ENCODE measurements at regions of chr14 and their contacts with region 1.

Region 1: GRCh38 chr14:55270832-55271565 is at the start of gene FBXO34:
- DNase-seq: peak; percentile 98
- H3K4me3 ChIP-seq: peak within 1 kb of the TSS; percentile 93
- H3K27ac ChIP-seq: peak within 1 kb of the TSS; percentile 58
- H3K4me1 ChIP-seq: peaks cover 37% of the 10 kb centered on the region
- CTCF ChIP-seq: peak; percentile 98
- total RNA-seq, gene FBXO34: 26.3 and 28.3 TPM in 2 replicates

Region 2: DNA sequence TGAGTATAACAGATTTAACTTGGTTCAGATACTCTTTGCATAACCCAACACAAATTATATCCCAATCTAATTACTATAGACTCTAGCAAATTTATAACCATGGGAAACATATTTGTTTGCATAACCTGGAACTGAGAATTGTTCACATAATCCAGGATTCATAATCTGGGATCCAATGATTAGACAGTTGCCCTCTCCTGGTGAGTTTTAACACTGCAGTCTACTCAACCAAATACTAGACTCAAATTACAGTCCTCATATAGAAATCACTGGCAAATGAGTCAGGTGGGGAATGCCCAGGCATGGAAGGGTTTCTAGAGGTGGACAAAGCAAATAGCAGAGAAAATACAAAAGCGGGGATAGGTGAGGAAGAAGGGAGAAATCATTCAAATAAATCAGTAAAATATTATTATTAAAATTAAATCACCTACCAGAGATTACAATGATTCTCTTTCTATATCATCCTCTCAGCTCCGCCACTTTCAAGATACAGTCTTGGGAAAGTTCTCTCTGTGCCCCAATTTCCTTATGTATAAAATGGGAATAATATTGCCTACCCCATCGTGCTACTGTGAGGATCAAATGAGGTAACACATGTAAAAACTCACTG is 377.7 kb before region 1 on chr14:
- CTCF ChIA-PET with region 1: no interaction called
- POLR2A ChIA-PET with region 1: no interaction called
- intact Hi-C with region 1: no loop called
- DNase-seq: peak; percentile 49
- H3K4me3 ChIP-seq: no peak overlapping the region
- H3K27ac ChIP-seq: no peak overlapping the region
- H3K4me1 ChIP-seq: no peaks in the 10 kb centered on the region
- CTCF ChIP-seq: peak; percentile 91

Region 3: GRCh38 chr14:55051426-55052268 is 219.4 kb before region 1 on chr14 and contains the start of gene MAPK1IP1L:
- CTCF ChIA-PET with region 1: no interaction called
- POLR2A ChIA-PET with region 1: no interaction called
- intact Hi-C with region 1: loop called (anchors 10 kb)
- DNase-seq: peak; percentile 92
- H3K4me3 ChIP-seq: peak within 1 kb of the TSS; percentile 95
- H3K27ac ChIP-seq: peak within 1 kb of the TSS; percentile 81
- H3K4me1 ChIP-seq: peaks cover 20% of the 10 kb centered on the region
- CTCF ChIP-seq: peak; percentile 87
- total RNA-seq, gene MAPK1IP1L: 24.6 and 27.9 TPM in 2 replicates

Region 4: DNA sequence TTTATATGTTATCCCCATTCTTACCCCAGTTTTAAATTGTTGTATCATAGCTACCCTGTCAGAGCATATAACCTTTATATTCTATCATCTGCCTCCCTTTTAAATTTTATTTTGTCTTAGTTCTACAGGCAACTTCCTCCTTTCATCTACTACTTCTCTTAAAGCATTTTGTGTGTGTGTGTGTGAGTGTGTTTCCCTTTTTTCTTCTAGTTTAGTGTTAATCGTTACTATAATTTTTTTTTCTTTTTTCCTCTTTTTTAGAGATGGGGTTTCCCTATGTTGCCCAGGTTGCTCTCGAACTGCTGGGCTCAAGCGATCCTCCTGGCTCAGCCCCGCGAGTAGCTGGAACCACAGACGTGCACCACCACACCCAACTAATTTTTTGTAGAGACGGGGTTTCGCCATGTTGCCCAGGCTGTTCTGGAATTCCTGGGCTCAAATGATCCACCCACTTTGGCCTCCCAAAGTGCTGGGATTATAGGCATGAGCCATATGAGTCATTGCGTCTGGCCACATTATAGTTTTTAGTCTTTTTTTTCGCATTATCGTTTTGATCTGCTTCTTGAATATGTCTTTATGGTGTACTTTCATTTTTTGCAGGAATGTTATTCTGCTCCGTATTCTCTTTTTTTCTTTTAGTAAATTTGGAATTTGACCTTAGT is 32.8 kb before region 1 on chr14:
- CTCF ChIA-PET with region 1: no interaction called
- POLR2A ChIA-PET with region 1: no interaction called
- intact Hi-C with region 1: no loop called
- DNase-seq: no peak
- H3K4me3 ChIP-seq: no peak overlapping the region
- H3K27ac ChIP-seq: no peak overlapping the region
- H3K4me1 ChIP-seq: no peaks in the 10 kb centered on the region
- CTCF ChIP-seq: no peak

Region 5: DNA sequence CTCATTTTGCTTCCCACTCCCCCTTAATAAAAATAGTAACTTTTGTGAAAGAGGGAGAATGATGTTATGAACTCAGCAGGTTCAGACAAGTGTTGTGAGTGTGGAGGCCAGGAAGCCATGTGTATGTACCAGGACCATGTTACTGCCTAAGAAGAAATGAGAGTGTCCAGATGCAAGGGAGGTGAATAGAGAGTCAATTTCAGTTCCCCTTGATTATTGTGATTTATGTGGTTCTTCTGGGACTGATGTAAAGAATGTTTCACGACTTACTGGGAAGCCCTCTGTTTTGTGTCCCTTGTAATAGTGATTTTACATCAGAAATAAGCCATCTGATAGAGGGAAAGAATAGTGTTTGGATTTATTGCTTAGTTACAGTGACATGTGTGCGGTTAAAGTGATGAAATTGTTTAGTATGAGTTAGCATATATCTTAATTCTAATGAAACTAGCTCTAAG is 32.7 kb after region 1 on chr14:
- CTCF ChIA-PET with region 1: no interaction called
- POLR2A ChIA-PET with region 1: interaction called, 7 read pairs
- intact Hi-C with region 1: loop called (anchors 1 kb)
- DNase-seq: peak; percentile 49
- H3K4me3 ChIP-seq: no peak overlapping the region
- H3K27ac ChIP-seq: no peak overlapping the region
- H3K4me1 ChIP-seq: peaks cover 27% of the 10 kb centered on the region
- CTCF ChIP-seq: no peak

Region 6: GRCh38 chr14:55411426-55412389 is 140.7 kb after region 1 on chr14 and contains the start of gene ATG14:
- CTCF ChIA-PET with region 1: no interaction called
- POLR2A ChIA-PET with region 1: interaction called, 3 read pairs
- intact Hi-C with region 1: loop called (anchors 5 kb)
- DNase-seq: peak; percentile 86
- H3K4me3 ChIP-seq: peak within 1 kb of the TSS; percentile 92
- H3K27ac ChIP-seq: peak within 1 kb of the TSS; percentile 23
- H3K4me1 ChIP-seq: peaks cover 20% of the 10 kb centered on the region
- CTCF ChIP-seq: no peak
- total RNA-seq, gene ATG14: 4.1 and 4.5 TPM in 2 replicates

Measured in OCI-LY7 (cell line).